ENCODE measurements at regions of chr17 and their contacts with region 1.

Region 1: DNA sequence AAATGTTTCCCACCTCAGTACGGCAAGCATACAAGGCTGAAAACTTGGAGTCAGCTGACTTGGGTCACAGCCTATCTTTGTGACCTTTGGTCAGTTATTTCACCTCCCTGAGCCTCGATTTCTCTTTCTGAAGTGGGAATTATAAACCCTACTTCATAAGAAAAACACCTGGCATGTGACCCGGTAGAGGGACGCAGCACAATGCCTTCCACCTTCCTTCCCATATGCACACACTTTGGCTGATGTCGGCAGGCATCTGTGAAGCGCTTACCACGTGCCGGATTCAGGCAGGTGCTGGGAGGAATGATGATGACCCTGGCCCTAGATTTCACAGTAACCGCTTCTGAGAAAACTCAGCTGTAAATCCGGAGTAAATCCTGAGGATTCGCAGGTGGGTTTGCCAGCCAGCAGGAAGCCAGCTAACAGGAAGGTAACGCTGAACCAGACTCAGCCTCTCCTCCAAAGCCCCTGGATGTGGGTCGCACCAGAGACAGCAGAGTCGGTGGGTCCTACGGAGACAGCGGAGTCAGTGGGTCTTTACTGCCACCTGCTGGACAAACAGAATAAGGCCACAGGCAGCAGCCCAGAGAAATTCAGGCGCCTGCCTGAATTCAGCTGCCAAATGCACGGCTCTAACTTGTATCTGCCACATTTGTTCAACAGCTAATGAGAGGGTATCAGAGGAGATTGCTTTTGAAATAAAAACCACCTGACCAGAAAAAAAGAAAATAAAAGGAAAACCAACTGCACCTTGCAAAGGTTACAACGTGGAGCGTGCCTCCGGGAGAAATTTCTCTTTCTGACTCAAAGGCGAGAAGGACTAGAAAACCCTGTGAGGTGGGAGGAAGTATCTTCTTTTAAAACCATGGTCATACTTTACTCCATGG is 16.6 kb downstream of the COPRS start:
- DNase-seq: peak; percentile 82
- CTCF ChIP-seq: peak; percentile 83

Region 2: GRCh38 chr17:31425282-31426040 is 417.0 kb before region 1 on chr17:
- in situ Hi-C with region 1: loop called (anchors 25 kb)
- DNase-seq: no peak
- CTCF ChIP-seq: no peak

Region 3: GRCh38 chr17:31549525-31550388 is 292.7 kb before region 1 on chr17:
- in situ Hi-C with region 1: loop called (anchors 10 kb)
- DNase-seq: peak; percentile 94
- CTCF ChIP-seq: no peak

Region 4: DNA sequence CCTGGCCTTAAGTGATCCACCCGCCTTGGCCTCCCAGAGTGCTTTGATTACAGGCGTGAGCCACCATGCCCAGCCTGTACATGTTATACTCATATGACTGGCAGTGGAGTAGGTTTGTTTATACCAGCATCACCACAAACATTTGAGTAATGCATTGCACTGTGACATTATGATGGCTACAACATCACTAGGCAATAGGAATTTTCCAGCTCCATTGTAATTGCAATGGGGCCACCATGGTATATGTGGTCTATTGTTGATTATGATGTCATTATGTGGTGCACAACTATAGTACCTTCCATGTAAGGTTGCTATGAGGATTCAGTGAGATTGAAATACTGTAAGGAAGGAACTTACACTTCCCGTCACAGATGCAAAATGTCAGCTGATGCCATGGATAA is 152.3 kb before region 1 on chr17:
- in situ Hi-C with region 1: no loop called
- DNase-seq: no peak
- CTCF ChIP-seq: no peak

Region 5: GRCh38 chr17:31907342-31907962 is 65.0 kb after region 1 on chr17:
- in situ Hi-C with region 1: no loop called
- DNase-seq: no peak
- CTCF ChIP-seq: no peak